Naive thymus-derived CD4-positive, alpha-beta T cell (primary cell): ENCODE measurements at regions of chr19 and their contacts with region 1.

Region 1: DNA sequence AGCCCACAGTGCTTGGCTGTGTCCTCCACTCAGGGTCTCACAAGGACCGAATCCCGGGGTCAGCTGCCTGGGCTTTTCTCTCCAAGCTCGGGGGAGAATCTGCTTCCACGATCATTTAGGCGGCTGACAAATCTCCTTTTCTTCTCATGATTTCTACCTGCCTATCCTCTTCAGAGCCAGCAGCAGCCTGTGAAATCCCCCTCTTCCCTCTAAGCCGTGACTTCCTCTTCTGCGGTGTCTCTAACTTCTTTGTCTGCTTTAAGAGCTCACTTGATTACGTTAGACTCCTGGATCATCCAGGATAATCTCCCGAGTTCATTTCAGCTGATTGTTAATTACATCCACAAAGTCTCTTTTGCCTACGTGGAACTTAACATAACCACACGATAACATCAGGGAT is 22.5 kb upstream of the ZNF845 start:
- DNase-seq: no peak
- ATAC-seq: no peak
- H3K4me3 ChIP-seq: no peak overlapping the region
- H3K4me3 Mint-ChIP-seq: peak overlapping the region in 1 of 10 donors; percentile 2
- H3K27ac ChIP-seq: no peak overlapping the region
- H3K27ac Mint-ChIP-seq: no peak overlapping the region
- H3K4me1 ChIP-seq: no peaks in the 10 kb centered on the region
- H3K4me1 Mint-ChIP-seq: no peaks in the 10 kb centered on the region
- H3K27me3 ChIP-seq: no peaks in the 10 kb centered on the region
- H3K27me3 Mint-ChIP-seq: peaks cover 0 to 51% (median 46%) of the 10 kb centered on the region in 5 donors

Region 2: DNA sequence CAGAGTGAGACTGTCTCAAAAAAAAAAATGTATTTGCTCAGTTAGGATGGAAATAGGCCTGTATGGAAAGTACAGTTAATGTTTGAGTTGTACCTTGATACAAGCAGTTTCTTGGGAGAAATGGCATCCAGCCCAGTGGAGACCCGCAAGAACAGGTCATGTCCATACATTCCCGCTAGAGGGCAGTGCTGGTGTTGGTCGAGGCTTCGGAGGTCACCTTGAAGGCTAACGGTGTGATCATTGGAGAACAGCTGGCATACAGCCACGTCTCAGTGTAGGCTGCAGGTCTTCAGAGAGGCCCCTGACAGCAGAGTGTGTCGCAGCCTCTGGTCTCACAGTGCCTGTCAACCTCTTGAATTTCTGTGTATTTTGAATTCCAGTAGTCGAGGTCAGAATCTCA is 967.5 kb before region 1 on chr19:
- CTCF ChIA-PET with region 1: no interaction called
- POLR2A ChIA-PET with region 1: no interaction called
- intact Hi-C with region 1: no loop called
- DNase-seq: peak in 6 of 9 donors; percentile 9 to 46 (median 33)
- ATAC-seq: peak; percentile 73
- H3K4me3 ChIP-seq: no peak overlapping the region
- H3K4me3 Mint-ChIP-seq: no peak overlapping the region
- H3K27ac ChIP-seq: no peak overlapping the region
- H3K27ac Mint-ChIP-seq: no peak overlapping the region
- H3K4me1 ChIP-seq: no peaks in the 10 kb centered on the region
- H3K4me1 Mint-ChIP-seq: no peaks in the 10 kb centered on the region
- H3K27me3 ChIP-seq: no peaks in the 10 kb centered on the region
- H3K27me3 Mint-ChIP-seq: no peaks in the 10 kb centered on the region

Region 3: GRCh38 chr19:53224606-53225005 is 86.4 kb before region 1 on chr19:
- CTCF ChIA-PET with region 1: no interaction called
- POLR2A ChIA-PET with region 1: no interaction called
- intact Hi-C with region 1: no loop called
- DNase-seq: no peak
- ATAC-seq: no peak
- H3K4me3 ChIP-seq: no peak overlapping the region
- H3K4me3 Mint-ChIP-seq: no peak overlapping the region
- H3K27ac ChIP-seq: no peak overlapping the region
- H3K27ac Mint-ChIP-seq: no peak overlapping the region
- H3K4me1 ChIP-seq: no peaks in the 10 kb centered on the region
- H3K4me1 Mint-ChIP-seq: no peaks in the 10 kb centered on the region
- H3K27me3 ChIP-seq: no peaks in the 10 kb centered on the region
- H3K27me3 Mint-ChIP-seq: no peaks in the 10 kb centered on the region

Region 4: DNA sequence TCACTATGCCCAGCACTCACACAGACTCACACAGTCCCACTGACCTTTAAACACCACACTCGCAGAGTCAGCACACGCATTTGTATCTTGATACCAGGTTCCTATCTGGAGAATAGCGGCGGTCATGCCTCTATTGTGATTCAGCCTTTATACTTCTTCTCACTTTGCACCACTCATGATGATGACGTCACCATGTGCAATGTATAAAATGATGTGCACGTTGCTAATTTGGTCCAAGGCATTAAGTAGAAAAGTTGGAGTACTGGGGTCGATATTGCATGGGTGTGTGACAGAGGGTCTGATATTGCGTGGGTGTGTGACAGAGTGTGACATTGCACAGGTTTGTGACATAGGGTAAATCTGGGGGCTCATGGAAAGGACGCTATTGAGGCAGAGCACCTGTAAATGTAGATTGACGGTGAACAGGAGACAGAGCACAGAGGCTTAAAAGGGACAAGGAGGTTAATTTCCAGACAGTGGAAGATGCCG is 39.0 kb before region 1 on chr19:
- CTCF ChIA-PET with region 1: no interaction called
- POLR2A ChIA-PET with region 1: no interaction called
- intact Hi-C with region 1: loop called in 1 of 2 experiments (anchors 5 kb)
- DNase-seq: no peak
- ATAC-seq: no peak
- H3K4me3 ChIP-seq: no peak overlapping the region
- H3K4me3 Mint-ChIP-seq: no peak overlapping the region
- H3K27ac ChIP-seq: no peak overlapping the region
- H3K27ac Mint-ChIP-seq: no peak overlapping the region
- H3K4me1 ChIP-seq: no peaks in the 10 kb centered on the region
- H3K4me1 Mint-ChIP-seq: peaks cover 0 to 2% (median 0%) of the 10 kb centered on the region in 7 donors
- H3K27me3 ChIP-seq: no peaks in the 10 kb centered on the region
- H3K27me3 Mint-ChIP-seq: peaks cover 0 to 14% (median 9%) of the 10 kb centered on the region in 5 donors